Endothelial cell of umbilical vein (primary cell): ENCODE measurements at regions of chr5 and their contacts with region 1.

Region 1: DNA sequence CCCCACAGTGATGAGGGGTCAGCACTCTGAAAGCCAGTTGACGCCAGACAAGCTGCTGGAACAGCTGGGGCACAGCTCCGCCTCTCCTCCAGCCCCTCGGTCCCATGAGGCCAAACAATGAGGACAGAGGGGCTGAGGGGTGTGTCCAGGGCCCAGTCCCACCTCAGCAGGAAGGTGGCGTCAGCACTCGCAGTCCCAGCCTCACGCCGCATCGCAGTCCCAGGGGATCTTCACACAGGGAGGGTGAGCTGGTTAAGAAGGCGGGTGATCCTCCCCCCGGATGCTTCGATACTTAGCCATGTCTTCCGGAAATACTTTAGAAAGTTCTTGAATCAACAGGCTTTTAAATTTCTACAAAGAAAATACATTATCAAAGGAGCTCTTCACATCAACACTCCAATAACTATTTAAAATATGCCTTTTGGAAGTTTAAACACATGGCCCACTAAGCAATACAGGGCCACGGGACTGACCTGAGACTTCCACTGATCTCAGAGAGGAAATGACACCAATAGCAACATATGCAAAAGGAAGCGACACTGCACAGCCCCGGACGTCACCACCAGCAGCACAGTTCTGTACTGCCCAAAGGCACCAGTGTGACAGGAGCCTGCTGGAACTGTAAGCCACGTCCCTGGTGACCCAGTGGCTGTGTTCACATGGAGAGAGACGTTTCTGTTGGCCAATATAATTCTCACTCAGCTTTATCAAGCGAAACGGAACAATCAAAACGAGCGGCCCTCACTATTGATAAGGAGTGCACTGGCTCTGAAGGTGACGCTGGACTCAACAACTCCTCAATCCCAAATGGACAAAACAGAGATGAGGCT is 5.9 kb downstream of the MED10 start:
- DNase-seq: peak; percentile 82
- H3K4me3 ChIP-seq: no peak overlapping the region
- H3K27ac ChIP-seq: peak overlapping the region; percentile 97
- H3K4me1 ChIP-seq: peaks cover 37% of the 10 kb centered on the region
- H3K27me3 ChIP-seq: no peaks in the 10 kb centered on the region
- CTCF ChIP-seq: no peak
- POLR2A ChIP-seq: no peak

Region 2: DNA sequence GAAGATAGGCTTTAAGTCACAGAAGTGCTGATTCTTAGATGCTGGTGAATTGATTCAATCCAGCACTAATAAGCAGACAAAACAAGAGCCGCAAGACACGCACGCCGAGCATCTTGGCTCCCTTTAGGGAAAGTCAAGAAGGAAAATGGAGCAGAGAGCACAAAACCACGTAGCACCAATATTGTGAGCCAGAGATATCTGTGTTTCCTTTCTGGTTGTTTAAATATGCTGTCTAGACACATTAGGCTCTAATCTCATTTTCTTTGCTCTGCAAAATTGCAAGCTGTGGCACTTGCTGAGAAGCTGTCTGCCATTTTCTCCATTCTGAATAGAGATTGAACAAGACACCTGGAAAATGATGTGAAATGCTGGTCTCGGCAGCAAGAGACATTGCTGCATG is 330.5 kb before region 1 on chr5:
- CTCF ChIA-PET with region 1: no interaction called
- POLR2A ChIA-PET with region 1: no interaction called
- dilution Hi-C with region 1: no loop called
- intact Hi-C with region 1: no loop called
- DNase-seq: no peak
- H3K4me3 ChIP-seq: no peak overlapping the region
- H3K27ac ChIP-seq: no peak overlapping the region
- H3K4me1 ChIP-seq: no peaks in the 10 kb centered on the region
- H3K27me3 ChIP-seq: no peaks in the 10 kb centered on the region
- CTCF ChIP-seq: no peak
- POLR2A ChIP-seq: no peak

Region 3: GRCh38 chr5:6419340-6419852 is 46.9 kb after region 1 on chr5:
- CTCF ChIA-PET with region 1: interaction called, 6 read pairs
- POLR2A ChIA-PET with region 1: no interaction called
- dilution Hi-C with region 1: no loop called
- intact Hi-C with region 1: loop called (anchors 1 kb)
- DNase-seq: peak; percentile 89
- H3K4me3 ChIP-seq: no peak overlapping the region
- H3K27ac ChIP-seq: peak overlapping the region; percentile 74
- H3K4me1 ChIP-seq: peaks cover 45% of the 10 kb centered on the region
- H3K27me3 ChIP-seq: no peaks in the 10 kb centered on the region
- CTCF ChIP-seq: no peak
- POLR2A ChIP-seq: no peak

Region 4: DNA sequence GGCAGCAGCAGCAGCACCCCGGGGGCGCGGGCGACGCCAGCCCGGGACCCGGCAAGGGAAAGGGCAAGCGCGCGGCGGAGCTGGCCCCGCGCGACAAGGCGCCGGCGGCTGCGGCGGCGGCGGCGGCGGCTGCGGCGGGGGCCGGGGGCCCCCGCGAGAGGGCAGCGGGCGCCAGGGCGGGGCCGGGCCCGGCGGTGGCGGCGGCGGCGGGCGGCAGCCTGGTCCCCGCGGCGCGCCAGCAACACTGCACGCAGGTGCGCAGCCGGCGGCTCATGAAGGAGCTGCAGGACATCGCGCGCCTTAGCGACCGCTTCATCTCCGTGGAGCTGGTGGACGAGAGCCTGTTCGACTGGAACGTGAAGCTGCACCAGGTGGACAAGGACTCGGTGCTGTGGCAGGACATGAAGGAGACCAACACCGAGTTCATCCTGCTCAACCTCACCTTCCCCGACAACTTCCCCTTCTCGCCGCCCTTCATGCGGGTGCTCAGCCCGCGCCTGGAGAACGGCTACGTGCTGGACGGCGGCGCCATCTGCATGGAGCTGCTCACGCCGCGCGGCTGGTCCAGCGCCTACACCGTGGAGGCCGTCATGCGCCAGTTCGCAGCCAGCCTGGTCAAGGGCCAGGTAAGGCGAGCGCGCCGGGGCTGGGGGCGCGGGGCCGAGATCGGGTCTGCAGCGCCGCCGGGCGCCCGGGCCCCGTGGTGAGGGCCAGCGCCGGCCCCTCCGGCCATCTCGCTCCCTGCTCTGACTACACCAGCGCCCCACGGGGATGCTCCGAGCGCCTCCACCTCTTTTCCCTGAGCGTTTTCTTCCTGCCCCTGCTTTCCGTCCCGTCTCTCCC is 76.4 kb after region 1 on chr5 and contains the start of gene UBE2QL1:
- CTCF ChIA-PET with region 1: no interaction called
- POLR2A ChIA-PET with region 1: no interaction called
- dilution Hi-C with region 1: no loop called
- intact Hi-C with region 1: loop called (anchors 2 kb)
- DNase-seq: peak; percentile 24
- H3K4me3 ChIP-seq: no peak within 1 kb of the TSS
- H3K27ac ChIP-seq: no peak within 1 kb of the TSS
- H3K4me1 ChIP-seq: peaks cover 5% of the 10 kb centered on the region
- H3K27me3 ChIP-seq: peaks cover 27 to 32% of the 10 kb centered on the region in 2 experiments
- CTCF ChIP-seq: no peak
- POLR2A ChIP-seq: no peak
- total RNA-seq, gene UBE2QL1: 0.15 and 0.21 TPM in 2 replicates

Region 5: DNA sequence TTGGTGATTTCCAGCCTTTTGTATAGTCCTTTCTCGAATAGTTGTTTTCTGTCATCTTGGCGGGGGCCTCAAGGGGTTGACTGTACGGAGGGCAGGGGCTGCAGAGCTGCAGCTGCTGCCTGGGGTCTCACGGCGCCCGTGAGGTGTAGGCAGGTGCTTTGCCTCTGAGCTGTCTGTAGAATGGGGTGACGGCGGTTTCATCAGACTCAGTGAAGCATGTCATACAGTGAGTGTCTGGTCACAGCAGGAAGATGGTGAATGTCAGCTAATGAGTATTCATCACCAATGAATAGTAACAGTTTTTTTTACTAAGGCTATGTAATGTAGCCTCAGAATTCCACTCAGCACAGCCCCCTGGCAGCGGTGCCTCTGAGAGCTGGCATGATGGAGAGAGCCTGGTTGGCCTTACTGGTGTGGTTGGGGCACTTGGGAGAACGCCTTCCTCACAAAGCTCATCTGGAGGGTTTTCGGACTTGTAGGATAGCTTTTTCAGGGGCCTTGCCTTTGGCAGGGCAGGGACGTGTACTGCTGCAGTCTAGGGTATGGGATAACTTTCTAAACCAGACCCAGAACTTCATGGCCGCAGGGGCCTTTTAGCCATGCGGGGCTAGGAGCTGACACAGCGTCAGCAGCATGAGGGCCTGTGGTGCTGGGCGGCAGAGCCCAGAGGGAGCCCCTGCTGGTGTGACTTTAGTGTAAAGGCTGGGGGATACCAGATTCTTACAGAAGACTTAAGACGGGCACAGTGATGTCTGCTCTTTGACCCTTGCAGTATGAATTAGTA is 355.7 kb after region 1 on chr5:
- CTCF ChIA-PET with region 1: interaction called, 3 read pairs
- POLR2A ChIA-PET with region 1: no interaction called
- dilution Hi-C with region 1: no loop called
- intact Hi-C with region 1: loop called (anchors 1 kb)
- DNase-seq: no peak
- H3K4me3 ChIP-seq: no peak overlapping the region
- H3K27ac ChIP-seq: no peak overlapping the region
- H3K4me1 ChIP-seq: peaks cover 28% of the 10 kb centered on the region
- H3K27me3 ChIP-seq: no peaks in the 10 kb centered on the region
- CTCF ChIP-seq: no peak
- POLR2A ChIP-seq: no peak